ENCODE measurements at regions of chr15 and their contacts with region 1.

Region 1: DNA sequence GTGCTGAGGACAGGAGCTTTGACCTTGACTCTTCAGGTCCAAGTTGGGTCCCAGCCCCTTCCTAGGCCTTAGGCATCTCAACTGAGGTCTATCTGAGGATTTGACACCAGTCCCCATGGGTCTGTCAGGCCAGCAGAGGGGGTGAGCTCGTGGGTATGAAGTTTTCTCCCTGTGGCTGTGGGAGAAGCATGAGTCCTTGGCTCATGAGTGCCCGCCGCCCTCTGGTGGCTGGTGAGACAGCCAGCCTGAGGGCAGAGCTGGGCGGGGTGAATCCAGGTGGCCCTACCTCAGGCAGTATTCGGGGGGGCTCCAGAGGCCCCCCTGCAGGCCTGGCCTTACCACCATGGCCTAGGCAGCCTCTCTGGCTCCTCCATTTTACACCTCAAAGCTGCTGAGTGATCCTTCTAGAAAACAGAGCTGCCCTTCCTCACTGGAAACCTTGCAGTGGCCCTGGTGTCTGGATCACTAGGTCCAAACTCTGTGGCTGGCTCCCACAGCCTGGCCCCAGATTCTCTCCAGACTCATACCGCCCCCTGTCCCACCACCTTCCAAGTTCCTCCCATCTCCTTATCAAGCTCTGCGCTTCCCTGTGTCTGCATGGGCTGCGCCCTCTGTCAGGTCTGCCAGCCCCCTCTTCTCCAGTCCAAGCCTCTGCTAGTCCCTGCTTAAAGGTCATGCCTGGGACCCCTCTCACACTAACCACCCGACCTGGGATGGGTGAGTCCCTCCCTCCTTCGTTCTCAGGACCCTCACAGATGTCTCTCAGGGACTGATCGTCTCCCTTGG is 16.1 kb downstream of the SH2D7 start:
- DNase-seq: peak; percentile 85
- CTCF ChIP-seq: peak; percentile 94

Region 2: DNA sequence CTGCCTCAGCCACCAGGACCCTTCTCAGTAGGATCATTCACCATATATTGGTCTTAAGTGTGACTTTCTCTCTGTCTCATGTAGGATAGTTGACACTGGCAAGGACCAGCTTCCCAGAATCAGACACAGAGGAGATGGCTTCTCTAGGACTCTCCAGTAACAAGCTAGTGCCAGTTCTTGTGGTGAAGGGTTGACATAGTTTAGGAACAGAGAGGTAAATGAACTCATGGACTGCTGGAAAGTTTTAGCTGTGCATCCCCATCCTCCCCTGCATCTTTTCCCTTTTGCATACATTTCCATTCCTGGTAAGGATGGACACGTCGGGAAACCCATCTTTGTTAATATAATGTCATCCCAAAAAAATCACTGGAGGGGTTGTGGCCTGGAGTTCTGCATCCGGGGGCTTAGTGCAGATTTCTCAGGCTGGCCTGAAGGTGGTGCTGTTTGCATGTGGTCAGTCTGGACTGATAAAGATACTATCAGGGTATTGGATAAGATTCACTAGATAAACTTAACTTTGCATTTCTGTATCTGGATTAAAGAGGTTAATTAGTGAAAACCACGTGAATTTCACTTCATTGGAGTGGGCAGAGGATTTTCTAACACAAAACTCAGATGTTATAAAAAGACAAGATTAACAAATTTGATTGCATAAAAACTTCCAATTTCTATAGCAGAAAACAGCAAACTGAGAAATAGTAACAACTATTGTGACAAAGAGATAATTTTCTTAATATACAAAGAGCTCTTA is 141.8 kb before region 1 on chr15:
- CTCF ChIA-PET with region 1: interaction called, 119 read pairs
- POLR2A ChIA-PET with region 1: no interaction called
- DNase-seq: peak; percentile 67
- CTCF ChIP-seq: peak; percentile 85

Region 3: GRCh38 chr15:78054966-78055365 is 53.5 kb before region 1 on chr15:
- CTCF ChIA-PET with region 1: interaction called, 10 read pairs
- POLR2A ChIA-PET with region 1: no interaction called
- DNase-seq: no peak
- CTCF ChIP-seq: no peak

Region 4: DNA sequence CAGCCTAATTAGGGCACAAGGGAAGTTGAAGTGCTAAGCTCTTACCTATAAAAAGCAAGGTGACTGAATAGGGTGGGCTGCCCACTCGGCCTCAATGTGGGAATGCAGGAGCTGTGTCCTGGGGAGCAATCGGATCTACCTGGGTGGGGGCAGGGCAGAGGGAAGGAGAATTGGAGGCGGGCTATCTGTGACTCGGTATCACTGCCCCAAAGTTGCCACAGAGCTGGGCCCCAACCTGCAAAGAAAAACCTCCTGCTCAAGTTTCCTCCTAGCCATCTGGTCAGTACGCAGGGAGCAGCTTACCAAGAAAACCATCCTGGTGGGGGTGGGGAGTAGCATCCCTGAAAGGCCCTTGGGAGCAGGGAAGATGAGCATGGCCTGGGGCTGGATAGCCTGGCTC is 12.0 kb after region 1 on chr15:
- CTCF ChIA-PET with region 1: interaction called, 30 read pairs
- POLR2A ChIA-PET with region 1: no interaction called
- DNase-seq: no peak
- CTCF ChIP-seq: no peak

Region 5: DNA sequence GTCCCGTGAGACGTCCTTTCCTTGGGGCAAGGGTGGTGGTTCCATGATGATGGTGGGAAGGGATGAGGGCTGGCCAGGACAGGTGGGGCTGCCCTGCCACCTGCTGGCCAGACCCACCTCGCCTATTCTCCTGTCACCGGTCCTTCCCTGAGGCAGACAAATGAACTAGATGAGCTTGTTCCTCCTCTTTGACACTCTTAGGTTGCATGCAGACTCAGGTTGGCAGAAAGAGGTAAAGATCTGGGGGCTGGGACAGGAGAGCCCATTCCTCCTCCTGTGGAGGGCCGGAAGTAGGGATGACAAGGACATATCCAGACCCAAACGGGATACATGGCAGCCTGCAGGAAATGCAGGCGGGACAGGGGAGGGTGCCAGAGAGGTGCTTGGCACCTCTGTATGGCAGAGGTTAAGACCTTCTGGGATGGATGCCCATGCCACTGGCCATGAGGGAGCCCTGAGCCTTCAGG is 87.3 kb after region 1 on chr15:
- CTCF ChIA-PET with region 1: interaction called, 141 read pairs
- POLR2A ChIA-PET with region 1: no interaction called
- DNase-seq: peak; percentile 85
- CTCF ChIP-seq: peak; percentile 93